Activated naive CD4-positive, alpha-beta T cell treated with anti-CD3 and anti-CD28 coated beads, Interleukin-2, amount 10 ng/mL, durations not matched to agents 7 days and 5 days (primary cell): ENCODE measurements at regions of chr1 and their contacts with region 1.

Region 1: GRCh38 chr1:26284597-26285360 is 4.9 kb downstream of the SH3BGRL3 start:
- DNase-seq: peak; percentile 96
- H3K4me3 Mint-ChIP-seq: peak overlapping the region; percentile 91
- H3K27ac Mint-ChIP-seq: peak overlapping the region; percentile 98
- H3K4me1 Mint-ChIP-seq: peaks cover 92% of the 10 kb centered on the region
- H3K27me3 Mint-ChIP-seq: no peaks in the 10 kb centered on the region

Region 2: DNA sequence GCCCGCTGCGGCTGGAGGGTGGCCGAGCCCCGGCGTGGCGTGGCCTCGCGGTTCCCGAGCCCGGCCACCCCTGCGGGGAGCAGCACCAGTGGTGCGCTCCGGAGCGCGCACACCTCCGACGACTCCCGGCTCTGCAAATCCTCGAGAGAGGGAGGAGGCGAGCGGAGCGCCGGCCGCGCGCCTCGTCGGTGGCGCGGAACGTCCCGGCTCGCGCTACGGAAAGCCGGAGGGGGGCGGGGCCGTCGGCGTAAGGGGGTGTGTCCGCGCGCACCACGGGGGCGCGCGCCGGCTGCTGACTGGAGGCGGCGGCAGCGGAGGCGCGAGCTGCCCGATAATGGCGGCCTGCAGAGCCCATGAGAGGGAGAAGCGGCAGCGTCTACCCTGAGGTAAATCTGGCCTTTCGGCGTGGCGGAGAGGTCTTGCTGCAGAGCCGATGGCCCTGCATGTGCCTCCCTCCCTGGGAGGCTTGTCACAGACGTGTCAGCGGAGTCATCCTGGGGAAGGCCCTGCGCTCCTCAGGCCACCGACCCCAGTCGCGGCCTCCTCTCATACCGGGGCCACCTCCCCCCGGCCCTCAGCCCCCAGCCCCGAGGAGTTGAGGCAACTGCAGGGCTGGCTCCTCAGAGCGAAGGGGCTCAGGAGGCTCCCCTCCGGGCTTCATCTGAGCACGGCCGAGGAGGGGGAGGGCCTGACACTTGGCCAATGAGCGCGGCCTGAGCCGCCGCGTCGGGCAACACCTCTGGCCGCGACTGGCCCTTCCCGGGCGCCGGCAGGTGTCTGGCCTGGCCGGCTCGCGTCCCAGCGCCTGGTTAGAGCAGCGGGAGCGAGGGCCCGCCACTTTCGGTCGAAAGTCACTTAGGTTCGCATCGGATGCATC is 173.0 kb before region 1 on chr1 and contains the start of gene PDIK1L:
- CTCF ChIA-PET with region 1: no interaction called
- DNase-seq: peak; percentile 94
- H3K4me3 Mint-ChIP-seq: peak within 1 kb of the TSS; percentile 98
- H3K27ac Mint-ChIP-seq: peak within 1 kb of the TSS; percentile 96
- H3K4me1 Mint-ChIP-seq: peaks cover 38% of the 10 kb centered on the region
- H3K27me3 Mint-ChIP-seq: no peaks in the 10 kb centered on the region

Region 3: DNA sequence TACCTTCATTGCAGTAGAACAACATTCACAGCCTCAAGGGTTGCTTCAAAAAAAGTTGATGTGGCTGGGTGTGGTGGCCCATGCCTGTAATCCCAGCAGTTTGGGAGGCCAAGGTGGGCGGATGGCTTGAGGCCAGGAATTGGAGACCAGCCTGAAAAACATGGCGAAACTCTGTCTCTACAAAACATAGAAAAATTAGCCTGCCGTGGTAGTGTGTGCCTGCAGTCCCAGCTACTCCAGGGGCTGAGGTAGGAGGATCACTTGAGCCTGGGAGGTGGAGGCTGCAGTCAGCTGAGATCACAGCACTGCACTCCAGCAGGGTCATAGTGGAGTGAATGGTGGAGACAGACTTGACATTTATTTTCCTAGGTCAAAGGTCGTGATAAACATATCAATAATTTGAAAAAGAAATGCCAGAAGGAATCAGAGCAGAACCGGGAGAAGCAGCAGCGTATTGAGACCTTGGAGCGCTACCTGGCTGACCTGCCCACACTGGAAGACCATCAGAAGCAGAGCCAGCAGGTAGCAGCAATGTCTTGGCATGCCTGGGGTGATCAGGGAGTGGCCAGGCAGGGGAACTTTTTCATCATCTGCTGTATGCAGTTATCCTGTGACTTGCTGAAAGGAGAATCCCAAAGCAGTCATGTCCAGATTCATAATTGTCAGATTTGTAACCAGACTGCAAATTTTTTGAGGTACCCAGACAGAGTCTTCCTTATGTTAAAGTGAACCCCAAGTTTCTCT is 16.5 kb before region 1 on chr1:
- CTCF ChIA-PET with region 1: no interaction called
- DNase-seq: no peak
- H3K4me3 Mint-ChIP-seq: no peak overlapping the region
- H3K27ac Mint-ChIP-seq: no peak overlapping the region
- H3K4me1 Mint-ChIP-seq: no peaks in the 10 kb centered on the region
- H3K27me3 Mint-ChIP-seq: no peaks in the 10 kb centered on the region

Region 4: GRCh38 chr1:26306290-26307229 is 21.8 kb after region 1 on chr1 and contains the start of gene UBXN11:
- CTCF ChIA-PET with region 1: interaction called, 119 read pairs
- DNase-seq: peak; percentile 98
- H3K4me3 Mint-ChIP-seq: peak within 1 kb of the TSS; percentile 95
- H3K27ac Mint-ChIP-seq: peak within 1 kb of the TSS; percentile 99
- H3K4me1 Mint-ChIP-seq: peaks cover 56% of the 10 kb centered on the region
- H3K27me3 Mint-ChIP-seq: no peaks in the 10 kb centered on the region

Region 5: DNA sequence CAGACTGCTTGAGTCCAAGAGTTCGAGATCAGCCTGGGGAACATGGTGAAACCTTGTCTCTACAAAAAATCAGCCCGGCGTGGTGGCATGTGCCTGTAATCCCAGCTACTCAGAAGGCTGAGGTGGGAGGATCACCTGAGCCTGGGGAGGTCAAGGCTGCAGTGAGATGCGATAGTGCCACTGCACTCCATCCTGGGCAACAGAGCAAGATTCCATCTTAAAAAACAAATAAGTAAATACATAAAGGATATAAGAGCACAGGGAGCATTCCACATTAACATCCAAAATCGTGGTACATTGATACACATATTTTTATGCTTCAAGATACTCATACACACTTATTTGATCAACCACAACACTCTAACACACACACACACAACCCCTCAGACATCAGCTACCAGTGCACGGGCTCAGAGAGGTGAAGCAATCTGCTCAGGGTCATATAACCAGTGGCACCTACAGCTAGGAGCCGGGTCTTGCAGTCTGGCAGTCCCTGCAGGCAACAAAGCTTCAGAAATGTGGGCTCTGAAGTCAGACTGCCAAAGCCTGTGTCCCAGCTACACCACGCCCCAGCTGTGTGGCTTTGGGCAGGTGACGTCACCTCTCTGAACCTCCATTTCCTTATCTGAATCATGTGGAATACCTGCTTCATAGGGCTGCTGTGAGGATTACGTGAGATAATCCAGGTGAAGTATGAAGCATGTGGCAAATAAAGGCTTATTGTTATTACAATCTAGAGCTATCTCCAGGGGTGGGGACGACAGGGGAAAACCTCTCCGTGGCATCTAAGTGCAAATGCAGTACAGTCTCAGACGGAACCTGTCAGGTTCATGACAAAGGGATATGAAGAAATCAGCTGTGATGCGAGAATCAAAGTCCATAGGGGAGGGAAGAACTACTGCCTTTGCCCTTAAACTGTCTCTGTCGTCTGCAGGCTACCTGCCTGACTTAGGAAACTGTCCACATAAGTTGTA is 73.9 kb after region 1 on chr1:
- CTCF ChIA-PET with region 1: interaction called, 22 read pairs
- DNase-seq: peak; percentile 88
- H3K4me3 Mint-ChIP-seq: no peak overlapping the region
- H3K27ac Mint-ChIP-seq: peak overlapping the region; percentile 60
- H3K4me1 Mint-ChIP-seq: peaks cover 51% of the 10 kb centered on the region
- H3K27me3 Mint-ChIP-seq: peaks cover 65% of the 10 kb centered on the region

Region 6: DNA sequence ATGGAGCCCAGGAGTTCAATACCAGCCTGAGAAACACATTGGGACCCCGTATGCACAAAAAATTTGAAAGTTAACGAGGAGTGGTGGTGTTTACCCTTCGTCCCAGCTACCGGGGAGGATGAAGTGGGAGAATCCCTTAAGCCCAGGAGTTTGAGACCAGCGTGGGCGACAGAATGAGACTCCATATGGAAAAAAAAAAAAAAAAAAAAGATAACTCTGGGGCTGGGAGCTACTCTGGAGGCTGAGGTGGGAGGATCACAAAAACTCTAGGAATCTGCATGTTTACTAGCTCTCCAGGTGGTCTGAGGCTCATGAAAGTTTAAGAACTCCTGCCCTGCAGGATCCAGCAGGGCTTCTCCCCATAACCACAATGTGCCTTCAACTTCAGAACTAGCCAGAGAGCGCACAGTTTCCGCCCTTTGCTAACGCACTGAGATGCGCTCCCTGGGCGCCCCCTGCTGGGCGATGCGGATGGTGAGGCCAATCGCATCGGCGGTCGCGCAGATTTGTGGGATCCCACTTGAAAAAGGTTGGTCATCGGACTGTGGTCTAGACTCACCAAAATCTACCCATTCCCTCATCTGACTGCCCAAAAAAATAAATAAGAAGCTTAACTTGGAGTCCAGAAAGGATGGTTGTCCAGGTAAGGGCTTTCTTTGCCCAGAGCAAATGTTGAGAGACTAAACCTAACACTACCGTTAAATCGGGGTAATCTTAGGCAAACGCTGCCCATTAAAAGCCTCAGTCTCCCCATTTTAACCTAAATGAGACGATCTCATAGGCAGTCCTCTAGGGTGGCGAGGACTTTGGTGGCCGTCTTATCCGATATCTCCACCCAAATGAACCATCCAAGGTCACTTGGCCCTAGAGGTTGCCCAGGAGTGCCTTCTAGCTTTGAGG is 79.0 kb after region 1 on chr1:
- CTCF ChIA-PET with region 1: interaction called, 22 read pairs
- DNase-seq: peak; percentile 90
- H3K4me3 Mint-ChIP-seq: no peak overlapping the region
- H3K27ac Mint-ChIP-seq: no peak overlapping the region
- H3K4me1 Mint-ChIP-seq: peaks cover 47% of the 10 kb centered on the region
- H3K27me3 Mint-ChIP-seq: peaks cover 79% of the 10 kb centered on the region

Region 7: GRCh38 chr1:26378088-26378878 is 93.5 kb after region 1 on chr1:
- CTCF ChIA-PET with region 1: interaction called, 10 read pairs
- DNase-seq: peak; percentile 87
- H3K4me3 Mint-ChIP-seq: peak overlapping the region; percentile 33
- H3K27ac Mint-ChIP-seq: peak overlapping the region; percentile 86
- H3K4me1 Mint-ChIP-seq: peaks cover 79% of the 10 kb centered on the region
- H3K27me3 Mint-ChIP-seq: no peaks in the 10 kb centered on the region

Region 8: GRCh38 chr1:26391450-26391849 is 106.7 kb after region 1 on chr1:
- CTCF ChIA-PET with region 1: interaction called, 30 read pairs
- DNase-seq: peak; percentile 77
- H3K4me3 Mint-ChIP-seq: no peak overlapping the region
- H3K27ac Mint-ChIP-seq: no peak overlapping the region
- H3K4me1 Mint-ChIP-seq: peaks cover 49% of the 10 kb centered on the region
- H3K27me3 Mint-ChIP-seq: peaks cover 22% of the 10 kb centered on the region